MCF 10A (cell line): ENCODE measurements at regions of chr1 and their contacts with region 1.

Region 1: GRCh38 chr1:159132271-159132881 is 39.0 kb upstream of the CADM3 start:
- DNase-seq: peak; percentile 92
- H3K4me3 Mint-ChIP-seq: no peak overlapping the region
- H3K27ac Mint-ChIP-seq: no peak overlapping the region
- H3K4me1 Mint-ChIP-seq: no peaks in the 10 kb centered on the region
- H3K27me3 Mint-ChIP-seq: no peaks in the 10 kb centered on the region
- CTCF ChIP-seq: peak; percentile 95

Region 2: GRCh38 chr1:159089184-159089791 is 43.1 kb before region 1 on chr1:
- CTCF ChIA-PET with region 1: interaction called, 12 read pairs
- POLR2A ChIA-PET with region 1: no interaction called
- intact Hi-C with region 1: no loop called
- DNase-seq: peak; percentile 29
- H3K4me3 Mint-ChIP-seq: no peak overlapping the region
- H3K27ac Mint-ChIP-seq: no peak overlapping the region
- H3K4me1 Mint-ChIP-seq: peaks cover 32% of the 10 kb centered on the region
- H3K27me3 Mint-ChIP-seq: no peaks in the 10 kb centered on the region
- CTCF ChIP-seq: peak; percentile 52

Region 3: DNA sequence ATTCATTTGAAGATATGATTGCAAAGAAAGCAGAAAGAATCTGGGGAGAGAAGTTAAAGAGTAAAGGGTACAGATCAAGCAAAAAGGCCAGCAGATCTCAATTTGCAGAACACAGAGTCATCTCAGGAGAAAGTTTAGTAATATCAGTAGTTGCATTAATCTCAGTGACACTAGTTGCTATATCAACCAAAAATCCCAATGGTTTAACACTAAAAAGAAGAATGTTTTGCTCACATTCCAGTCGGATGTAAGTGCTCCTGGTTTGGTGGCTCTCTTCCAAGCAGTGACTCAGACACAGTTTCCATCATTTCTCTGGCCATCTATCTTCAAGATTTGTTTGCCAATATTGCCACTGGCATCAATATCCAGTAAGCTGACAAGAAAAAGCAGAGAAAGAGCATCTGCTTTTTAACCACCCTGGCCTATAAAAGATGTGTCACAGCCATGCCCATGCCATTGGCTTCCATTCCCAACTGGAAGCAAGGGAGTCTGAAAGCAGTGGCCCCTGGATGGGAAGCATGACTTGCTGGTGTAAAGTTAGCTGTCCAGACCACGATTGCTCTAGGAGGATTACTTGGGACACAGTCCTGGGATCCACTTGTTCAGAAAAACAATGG is 10.3 kb before region 1 on chr1:
- CTCF ChIA-PET with region 1: interaction called, 55 read pairs
- POLR2A ChIA-PET with region 1: interaction called, 4 read pairs
- intact Hi-C with region 1: no loop called
- DNase-seq: peak; percentile 87
- H3K4me3 Mint-ChIP-seq: no peak overlapping the region
- H3K27ac Mint-ChIP-seq: no peak overlapping the region
- H3K4me1 Mint-ChIP-seq: peaks cover 11% of the 10 kb centered on the region
- H3K27me3 Mint-ChIP-seq: no peaks in the 10 kb centered on the region
- CTCF ChIP-seq: no peak

Region 4: GRCh38 chr1:159152031-159152430 is 19.7 kb after region 1 on chr1:
- CTCF ChIA-PET with region 1: interaction called, 30 read pairs
- POLR2A ChIA-PET with region 1: interaction called, 3 read pairs
- intact Hi-C with region 1: no loop called
- DNase-seq: no peak
- H3K4me3 Mint-ChIP-seq: no peak overlapping the region
- H3K27ac Mint-ChIP-seq: no peak overlapping the region
- H3K4me1 Mint-ChIP-seq: peaks cover 7% of the 10 kb centered on the region
- H3K27me3 Mint-ChIP-seq: peaks cover 12% of the 10 kb centered on the region
- CTCF ChIP-seq: no peak

Region 5: GRCh38 chr1:159197561-159198557 is 65.5 kb after region 1 on chr1:
- CTCF ChIA-PET with region 1: interaction called, 358 read pairs
- POLR2A ChIA-PET with region 1: interaction called, 3 read pairs
- intact Hi-C with region 1: loop called (anchors 1 kb)
- DNase-seq: peak; percentile 88
- H3K4me3 Mint-ChIP-seq: no peak overlapping the region
- H3K27ac Mint-ChIP-seq: no peak overlapping the region
- H3K4me1 Mint-ChIP-seq: peaks cover 32% of the 10 kb centered on the region
- H3K27me3 Mint-ChIP-seq: no peaks in the 10 kb centered on the region
- CTCF ChIP-seq: peak; percentile 95

Region 6: GRCh38 chr1:159307346-159308020 is 175.1 kb after region 1 on chr1:
- CTCF ChIA-PET with region 1: no interaction called
- POLR2A ChIA-PET with region 1: no interaction called
- intact Hi-C with region 1: no loop called
- DNase-seq: no peak
- H3K4me3 Mint-ChIP-seq: no peak overlapping the region
- H3K27ac Mint-ChIP-seq: no peak overlapping the region
- H3K4me1 Mint-ChIP-seq: peaks cover 6% of the 10 kb centered on the region
- H3K27me3 Mint-ChIP-seq: no peaks in the 10 kb centered on the region
- CTCF ChIP-seq: no peak

Region 7: DNA sequence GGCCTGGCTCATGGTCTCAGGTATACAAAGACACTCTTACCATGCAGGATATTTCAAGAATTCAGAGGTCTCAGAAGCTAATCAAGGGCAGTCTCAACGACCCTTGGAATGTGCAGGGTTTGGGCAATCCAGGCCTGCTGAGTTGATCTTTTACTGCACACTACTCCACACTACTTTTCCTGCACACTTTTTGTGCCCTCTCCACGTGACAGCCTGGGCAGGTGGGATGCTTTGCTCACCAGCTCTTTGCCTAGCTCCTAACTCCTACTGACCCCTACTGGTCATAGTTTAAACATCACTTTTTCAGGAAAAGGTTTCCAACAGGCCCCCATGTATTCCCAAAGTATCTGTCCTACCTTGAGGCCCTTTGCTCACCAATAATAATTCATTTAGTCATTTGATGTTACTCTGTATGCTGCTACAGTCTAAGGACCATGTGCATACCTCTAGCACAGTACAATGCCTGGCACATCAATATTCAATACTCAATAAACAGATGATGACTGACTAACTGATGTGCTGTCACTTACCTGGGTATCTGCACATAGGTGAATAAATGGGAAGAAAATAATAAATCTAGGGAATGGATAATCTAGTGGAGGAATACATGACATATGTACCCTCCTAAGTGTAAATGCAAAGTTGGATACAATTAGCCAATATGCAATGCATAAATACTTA is 658.0 kb after region 1 on chr1:
- CTCF ChIA-PET with region 1: interaction called, 5 read pairs
- POLR2A ChIA-PET with region 1: no interaction called
- intact Hi-C with region 1: loop called (anchors 1 kb)
- DNase-seq: peak; percentile 66
- H3K4me3 Mint-ChIP-seq: no peak overlapping the region
- H3K27ac Mint-ChIP-seq: peak overlapping the region; percentile 29
- H3K4me1 Mint-ChIP-seq: peaks cover 32% of the 10 kb centered on the region
- H3K27me3 Mint-ChIP-seq: no peaks in the 10 kb centered on the region
- CTCF ChIP-seq: peak; percentile 85